ENCODE measurements at regions of chr6 and their contacts with region 1.

Region 1: DNA sequence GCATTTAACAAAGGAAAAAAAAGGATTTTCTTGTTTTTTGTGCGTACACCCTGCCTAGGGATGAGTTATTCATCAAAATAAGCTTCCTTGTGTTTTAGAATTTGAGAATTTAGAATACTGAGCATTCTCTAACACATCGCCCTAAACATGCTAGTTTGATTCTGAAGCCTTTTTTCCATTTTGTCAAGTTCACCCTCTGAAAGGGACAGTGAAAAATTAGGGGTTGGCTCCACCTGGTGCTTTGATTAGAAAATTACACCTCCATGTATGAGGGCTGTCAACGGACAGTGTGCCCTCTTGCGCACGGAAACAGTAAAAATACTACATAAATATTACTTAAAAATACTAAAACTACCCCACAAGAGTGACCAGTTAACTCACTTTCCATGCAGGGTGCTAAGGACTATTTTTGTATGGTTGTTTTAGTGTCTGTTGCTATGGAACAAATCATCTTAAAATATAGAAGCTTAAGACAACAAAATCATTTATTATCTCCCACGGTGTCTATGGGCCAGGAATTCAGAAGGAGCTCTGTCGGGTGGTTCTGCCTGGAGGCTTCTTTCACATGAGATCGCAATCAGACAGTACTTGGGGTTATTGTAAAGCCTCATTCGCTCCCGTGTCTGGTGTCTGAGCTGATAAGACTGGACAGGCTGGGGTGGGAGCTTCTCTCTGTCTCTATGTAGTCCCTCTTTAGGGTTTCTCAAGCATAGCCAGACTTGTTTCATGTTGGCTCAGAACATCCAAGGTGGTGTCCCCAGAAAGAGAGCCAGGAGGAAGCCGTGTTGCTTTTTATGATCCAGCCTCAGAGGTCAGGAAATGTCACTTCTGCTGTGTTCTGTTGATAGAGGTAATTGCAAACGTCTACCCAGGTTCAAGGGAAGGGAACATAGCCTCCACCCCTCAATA is 41.1 kb upstream of the TMEM170B start:
- DNase-seq: peak; percentile 68
- H3K4me3 ChIP-seq: no peak overlapping the region
- H3K27ac ChIP-seq: peak overlapping the region; percentile 32 to 48
- H3K4me1 ChIP-seq: peaks cover 9% of the 10 kb centered on the region
- H3K27me3 ChIP-seq: no peaks in the 10 kb centered on the region
- CTCF ChIP-seq: peak; percentile 82 to 98 (median 96)
- POLR2A ChIP-seq: no peak

Region 2: DNA sequence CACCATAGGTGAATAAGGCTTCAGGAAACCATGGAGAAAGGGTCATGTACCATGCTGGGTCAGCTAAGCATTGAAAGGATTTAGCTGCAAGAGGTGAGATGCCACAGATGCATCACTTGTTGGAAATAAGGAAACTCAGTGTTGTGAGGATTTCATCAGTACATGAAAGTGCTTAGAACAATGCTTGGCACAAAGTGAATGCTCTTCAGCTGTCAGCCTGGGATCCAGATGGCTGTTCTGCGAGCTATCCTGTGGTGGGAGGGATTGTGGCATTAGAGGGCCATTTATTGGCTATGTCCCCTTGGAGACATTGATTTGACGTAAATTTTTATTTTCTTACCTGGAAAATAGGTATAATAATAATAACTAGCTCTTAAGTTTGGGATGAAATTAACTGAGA is 505.3 kb before region 1 on chr6:
- intact Hi-C with region 1: no loop called
- DNase-seq: no peak
- H3K4me3 ChIP-seq: no peak overlapping the region
- H3K27ac ChIP-seq: no peak overlapping the region
- H3K4me1 ChIP-seq: no peaks in the 10 kb centered on the region
- H3K27me3 ChIP-seq: no peaks in the 10 kb centered on the region
- CTCF ChIP-seq: no peak
- POLR2A ChIP-seq: no peak

Region 3: DNA sequence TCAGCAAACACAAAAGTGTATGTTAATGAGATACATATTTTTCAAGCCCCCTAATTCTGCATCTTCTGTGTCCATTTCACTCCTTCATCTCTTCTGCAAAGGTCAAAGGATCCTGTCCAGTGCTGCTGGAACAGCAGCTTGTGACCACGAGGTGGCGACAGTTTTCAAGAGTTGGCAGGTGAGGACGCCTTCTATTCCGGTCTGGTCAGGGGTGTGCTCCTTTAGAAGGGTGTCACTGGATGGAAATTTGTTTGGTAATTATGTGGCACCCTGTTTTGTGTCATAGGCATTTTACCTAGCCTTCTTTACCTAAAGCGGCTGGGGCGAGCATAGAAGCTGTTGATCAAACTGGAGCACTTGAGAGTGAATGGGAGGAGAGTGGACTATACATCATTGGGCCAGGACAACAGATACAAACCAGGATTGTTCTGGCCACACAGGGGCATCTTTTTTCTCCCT is 352.0 kb before region 1 on chr6:
- intact Hi-C with region 1: loop called (anchors 2 kb)
- DNase-seq: peak; percentile 83
- H3K4me3 ChIP-seq: no peak overlapping the region
- H3K27ac ChIP-seq: no peak overlapping the region
- H3K4me1 ChIP-seq: peaks cover 4% of the 10 kb centered on the region
- H3K27me3 ChIP-seq: no peaks in the 10 kb centered on the region
- CTCF ChIP-seq: peak; percentile 82 to 91 (median 87)
- POLR2A ChIP-seq: no peak

Region 4: DNA sequence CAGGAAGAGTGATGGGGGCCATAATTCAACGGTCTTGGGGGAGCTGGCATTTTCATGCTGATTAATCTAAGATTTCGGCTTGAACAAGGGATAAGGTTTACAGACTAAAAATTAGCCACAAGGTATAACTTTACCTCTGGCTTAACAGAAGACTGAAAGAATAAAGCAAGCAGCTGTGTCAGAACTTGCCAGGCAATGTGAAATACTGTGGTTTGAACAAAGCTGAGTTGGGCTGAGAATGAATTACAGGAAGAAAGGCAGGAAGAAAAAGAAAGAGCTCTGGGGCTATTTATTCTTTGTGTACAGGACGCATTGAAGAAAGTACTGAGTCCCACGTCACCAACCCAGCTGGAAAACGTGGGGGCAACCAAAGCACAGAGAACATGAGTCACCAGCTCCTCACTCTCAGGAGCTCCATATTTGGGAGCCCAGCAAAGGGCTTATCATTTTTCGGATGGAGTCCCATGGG is 142.5 kb before region 1 on chr6:
- intact Hi-C with region 1: no loop called
- DNase-seq: peak; percentile 44
- H3K4me3 ChIP-seq: no peak overlapping the region
- H3K27ac ChIP-seq: peak overlapping the region; percentile 37 to 91
- H3K4me1 ChIP-seq: peaks cover 22% of the 10 kb centered on the region
- H3K27me3 ChIP-seq: no peaks in the 10 kb centered on the region
- CTCF ChIP-seq: no peak
- POLR2A ChIP-seq: no peak

Region 5: DNA sequence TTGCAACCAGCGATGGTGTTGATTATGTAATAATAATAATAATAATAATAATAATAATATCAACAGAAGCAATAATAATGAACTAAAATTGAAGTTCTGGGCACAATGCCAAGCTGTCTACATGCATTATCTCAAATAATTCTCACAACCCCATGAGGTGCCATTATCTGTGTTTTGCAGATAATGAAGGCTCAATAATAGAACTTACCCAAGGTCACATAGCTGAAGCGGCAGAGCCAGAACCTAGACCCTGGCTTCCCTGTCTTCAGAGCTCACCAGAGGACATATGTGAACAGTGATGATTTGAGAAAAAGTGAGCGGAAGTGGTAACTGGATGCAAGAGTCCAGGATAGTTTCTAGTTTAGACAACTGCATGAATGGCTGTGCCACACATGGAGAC is 606.8 kb after region 1 on chr6:
- intact Hi-C with region 1: no loop called
- DNase-seq: no peak
- H3K4me3 ChIP-seq: no peak overlapping the region
- H3K27ac ChIP-seq: no peak overlapping the region
- H3K4me1 ChIP-seq: no peaks in the 10 kb centered on the region
- H3K27me3 ChIP-seq: no peaks in the 10 kb centered on the region
- CTCF ChIP-seq: no peak
- POLR2A ChIP-seq: no peak